H1 (cell line): ENCODE measurements at regions of chr15 and their contacts with region 1.

Region 1: DNA sequence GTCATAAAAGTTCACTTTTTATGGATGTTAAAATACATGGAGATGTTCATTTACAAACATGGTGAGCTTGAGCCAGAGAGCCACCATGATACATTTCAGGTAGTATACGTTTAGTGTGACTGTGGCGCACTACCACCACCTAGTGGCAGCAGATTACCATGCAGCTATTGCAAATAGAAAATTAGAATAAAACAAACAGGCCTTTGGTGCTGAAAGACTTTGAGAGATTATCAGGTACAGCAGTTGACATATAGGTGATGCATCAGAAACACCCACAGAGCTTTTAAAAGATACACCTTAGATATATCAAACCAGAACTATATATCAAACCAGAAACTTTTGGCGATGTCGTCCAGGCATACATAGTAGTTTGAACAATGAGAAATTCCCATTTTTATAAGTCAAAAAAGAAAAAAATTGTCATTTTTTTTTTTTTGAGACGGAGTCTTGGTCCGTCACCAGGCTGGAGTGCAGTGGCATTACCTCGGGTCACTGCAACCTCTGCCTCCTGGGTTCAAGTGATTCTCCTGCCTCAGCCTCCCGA is 42.0 kb upstream of the ICE2 start:
- DNase-seq: peak in 1 of 2 experiments; percentile 87
- H3K4me3 ChIP-seq: no peak overlapping the region
- H3K27ac ChIP-seq: no peak overlapping the region
- H3K4me1 ChIP-seq: peaks cover 0 to 3% (median 0%) of the 10 kb centered on the region in 4 experiments; a peak in 4 of 7 replicates
- H3K27me3 ChIP-seq: no peaks in the 10 kb centered on the region
- CTCF ChIP-seq: peak in 2 of 3 experiments; percentile 74 to 86; a peak in 3 of 4 replicates
- EP300 ChIP-seq: no peak
- POLR2A ChIP-seq: no peak
- RAD21 ChIP-seq: peak; percentile 82 to 83

Region 2: GRCh38 chr15:60355148-60355857 is 165.6 kb before region 1 on chr15:
- CTCF ChIA-PET with region 1: interaction called, 78 read pairs
- POLR2A ChIA-PET with region 1: no interaction called
- DNase-seq: no peak
- H3K4me3 ChIP-seq: no peak overlapping the region
- H3K27ac ChIP-seq: no peak overlapping the region
- H3K4me1 ChIP-seq: no peaks in the 10 kb centered on the region; a peak in 1 of 7 replicates
- H3K27me3 ChIP-seq: no peaks in the 10 kb centered on the region
- CTCF ChIP-seq: no peak
- EP300 ChIP-seq: no peak
- POLR2A ChIP-seq: no peak
- RAD21 ChIP-seq: no peak

Region 3: GRCh38 chr15:60507596-60508424 is 13.1 kb before region 1 on chr15:
- CTCF ChIA-PET with region 1: interaction called, 103 read pairs
- POLR2A ChIA-PET with region 1: no interaction called
- DNase-seq: peak in 1 of 2 experiments; percentile 54
- H3K4me3 ChIP-seq: no peak overlapping the region
- H3K27ac ChIP-seq: no peak overlapping the region
- H3K4me1 ChIP-seq: peaks cover 0 to 3% (median 0%) of the 10 kb centered on the region in 4 experiments; a peak in 2 of 7 replicates
- H3K27me3 ChIP-seq: no peaks in the 10 kb centered on the region; a peak in 1 of 7 replicates
- CTCF ChIP-seq: peak in 2 of 3 experiments; percentile 75 to 91; a peak in 3 of 4 replicates
- EP300 ChIP-seq: no peak
- POLR2A ChIP-seq: no peak
- RAD21 ChIP-seq: peak; percentile 86 to 88

Region 4: GRCh38 chr15:60541481-60542299 is 20.8 kb after region 1 on chr15:
- CTCF ChIA-PET with region 1: interaction called, 14 read pairs
- POLR2A ChIA-PET with region 1: interaction called, 3 read pairs
- DNase-seq: no peak
- H3K4me3 ChIP-seq: no peak overlapping the region
- H3K27ac ChIP-seq: no peak overlapping the region
- H3K4me1 ChIP-seq: peaks cover 0 to 14% (median 3%) of the 10 kb centered on the region in 4 experiments; a peak in 6 of 7 replicates
- H3K27me3 ChIP-seq: no peaks in the 10 kb centered on the region
- CTCF ChIP-seq: no peak
- EP300 ChIP-seq: no peak
- POLR2A ChIP-seq: no peak
- RAD21 ChIP-seq: no peak

Region 5: DNA sequence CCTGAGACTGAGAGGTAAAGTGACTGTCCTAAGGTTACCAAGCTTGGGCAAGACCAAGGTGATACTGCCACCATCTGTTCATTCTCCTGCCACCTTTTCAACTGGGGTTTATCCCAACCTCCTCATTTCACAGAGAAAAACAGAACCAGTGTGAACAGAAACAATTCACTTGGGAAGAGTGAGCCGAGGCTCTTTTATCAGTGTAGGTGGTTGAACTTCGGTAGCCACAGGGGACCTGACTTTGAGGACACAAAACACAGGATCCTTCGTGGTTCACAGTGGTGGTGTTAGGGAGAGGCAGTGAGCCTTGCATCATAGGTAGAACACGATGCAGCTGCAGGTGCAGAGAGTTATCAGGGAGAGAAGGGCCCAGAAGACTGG is 30.9 kb after region 1 on chr15:
- CTCF ChIA-PET with region 1: interaction called, 23 read pairs
- POLR2A ChIA-PET with region 1: interaction called, 3 read pairs
- DNase-seq: no peak
- H3K4me3 ChIP-seq: no peak overlapping the region
- H3K27ac ChIP-seq: no peak overlapping the region
- H3K4me1 ChIP-seq: peaks cover 0 to 14% (median 9%) of the 10 kb centered on the region in 4 experiments; a peak in 4 of 7 replicates
- H3K27me3 ChIP-seq: no peaks in the 10 kb centered on the region
- CTCF ChIP-seq: peak in 2 of 3 experiments; percentile 11 to 31; a peak in 2 of 4 replicates
- EP300 ChIP-seq: no peak
- POLR2A ChIP-seq: no peak
- RAD21 ChIP-seq: peak; percentile 45 to 52

Region 6: GRCh38 chr15:60568301-60568742 is 47.4 kb after region 1 on chr15:
- CTCF ChIA-PET with region 1: no interaction called
- POLR2A ChIA-PET with region 1: no interaction called
- DNase-seq: no peak
- H3K4me3 ChIP-seq: no peak overlapping the region
- H3K27ac ChIP-seq: peak overlapping the region; percentile 46; the same call in 1 of the 2 replicates
- H3K4me1 ChIP-seq: peaks cover 3 to 14% (median 12%) of the 10 kb centered on the region in 4 experiments
- H3K27me3 ChIP-seq: no peaks in the 10 kb centered on the region
- CTCF ChIP-seq: no peak
- EP300 ChIP-seq: no peak
- POLR2A ChIP-seq: no peak
- RAD21 ChIP-seq: no peak

Region 7: GRCh38 chr15:60592371-60593169 is 71.7 kb after region 1 on chr15:
- CTCF ChIA-PET with region 1: interaction called, 10 read pairs
- POLR2A ChIA-PET with region 1: no interaction called
- DNase-seq: peak in 1 of 2 experiments; percentile 81
- H3K4me3 ChIP-seq: peak overlapping the region; percentile 79 to 82 (median 80)
- H3K27ac ChIP-seq: no peak overlapping the region
- H3K4me1 ChIP-seq: peaks cover 0 to 5% (median 2%) of the 10 kb centered on the region in 4 experiments; a peak in 2 of 7 replicates
- H3K27me3 ChIP-seq: peaks cover 0 to 7% (median 0%) of the 10 kb centered on the region in 4 experiments; a peak in 2 of 7 replicates
- CTCF ChIP-seq: peak; percentile 7 to 15 (median 9); a peak in 3 of 4 replicates
- EP300 ChIP-seq: no peak
- POLR2A ChIP-seq: peak in 1 of 2 experiments; percentile 72; a peak in 2 of 3 replicates
- RAD21 ChIP-seq: peak in 1 of 2 experiments; percentile 11; a peak in 2 of 4 replicates

Region 8: DNA sequence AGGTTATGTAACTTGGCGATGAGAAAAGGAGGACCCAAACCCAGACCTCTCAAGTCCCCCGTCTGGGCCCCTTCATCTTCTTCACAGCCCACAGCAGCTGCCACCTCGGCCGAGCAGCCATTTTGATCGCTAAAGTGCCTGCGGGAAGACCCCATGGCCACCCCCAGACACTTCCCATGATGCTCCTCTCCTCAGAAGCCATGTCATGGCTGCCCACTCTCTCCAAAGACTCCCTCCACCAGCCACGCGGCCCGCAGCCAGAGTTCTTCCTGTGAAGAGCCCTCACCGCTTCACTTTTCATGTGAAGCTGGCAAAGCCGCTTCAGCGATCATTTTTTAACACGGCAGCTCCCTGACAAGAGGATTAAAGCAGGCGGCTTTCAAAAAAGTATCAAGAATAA is 373.0 kb after region 1 on chr15:
- CTCF ChIA-PET with region 1: no interaction called
- POLR2A ChIA-PET with region 1: no interaction called
- DNase-seq: no peak
- H3K4me3 ChIP-seq: no peak overlapping the region
- H3K27ac ChIP-seq: no peak overlapping the region
- H3K4me1 ChIP-seq: no peaks in the 10 kb centered on the region; a peak in 1 of 7 replicates
- H3K27me3 ChIP-seq: no peaks in the 10 kb centered on the region
- CTCF ChIP-seq: no peak
- EP300 ChIP-seq: no peak
- POLR2A ChIP-seq: no peak
- RAD21 ChIP-seq: no peak